Left colon (tissue), 2 donors: ENCODE measurements at regions of chr2 and their contacts with region 1.

Region 1: GRCh38 chr2:126527836-126528507 is 128.0 kb upstream of the GYPC start:
- DNase-seq: peak; percentile 40 to 78
- ATAC-seq: peak; percentile 58

Region 2: DNA sequence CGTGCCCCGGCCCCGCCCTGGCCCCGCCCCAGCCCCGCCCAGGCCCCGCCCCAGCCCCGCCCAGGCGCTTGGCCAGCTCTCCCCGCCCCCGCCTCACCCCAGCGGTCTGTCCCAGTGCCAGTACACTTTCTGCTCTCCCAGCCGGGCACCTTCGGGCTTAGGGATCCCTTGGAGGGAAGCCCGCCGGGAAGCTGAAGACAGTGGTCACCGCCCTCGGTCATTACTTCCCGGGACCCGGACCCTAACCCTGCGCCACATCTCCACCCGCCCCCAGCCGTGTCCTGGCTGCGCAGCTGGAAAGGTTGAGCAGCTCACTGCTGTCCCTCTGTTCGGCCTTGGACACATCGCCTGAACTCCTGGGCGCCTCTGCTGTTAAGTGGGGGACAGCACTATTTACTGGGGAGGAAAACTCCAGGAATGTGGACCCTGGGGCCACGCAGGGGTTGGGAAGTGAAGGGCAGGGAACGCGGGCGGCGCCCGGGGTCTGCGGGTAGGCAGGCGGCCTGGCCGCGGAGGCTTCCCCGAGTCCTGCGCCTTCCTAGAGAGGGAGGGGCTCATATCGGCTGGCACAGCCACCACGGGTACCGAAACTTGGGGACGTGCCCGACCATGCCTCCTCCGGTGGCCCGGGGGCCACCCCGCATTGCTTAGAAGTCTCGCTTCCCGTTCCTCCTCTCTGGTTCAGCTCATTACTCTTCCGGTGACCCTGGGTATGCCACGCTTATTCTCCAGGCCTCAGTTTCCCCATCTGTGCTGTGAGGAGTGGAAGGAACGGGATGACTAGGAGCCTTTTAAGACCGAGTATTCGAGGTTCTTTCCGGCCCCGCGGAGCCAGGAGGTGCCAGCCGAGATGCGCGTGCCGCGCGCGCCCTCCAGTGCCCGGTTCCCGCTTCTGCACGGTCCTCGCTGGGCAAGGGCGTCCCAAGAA is 249.0 kb after region 1 on chr2:
- intact Hi-C with region 1: loop called in 1 of 2 experiments (anchors 10 kb)
- DNase-seq: peak; percentile 61 to 84
- ATAC-seq: peak; percentile 96